Naive thymus-derived CD4-positive, alpha-beta T cell (primary cell): ENCODE measurements at regions of chr1 and their contacts with region 1.

Region 1: DNA sequence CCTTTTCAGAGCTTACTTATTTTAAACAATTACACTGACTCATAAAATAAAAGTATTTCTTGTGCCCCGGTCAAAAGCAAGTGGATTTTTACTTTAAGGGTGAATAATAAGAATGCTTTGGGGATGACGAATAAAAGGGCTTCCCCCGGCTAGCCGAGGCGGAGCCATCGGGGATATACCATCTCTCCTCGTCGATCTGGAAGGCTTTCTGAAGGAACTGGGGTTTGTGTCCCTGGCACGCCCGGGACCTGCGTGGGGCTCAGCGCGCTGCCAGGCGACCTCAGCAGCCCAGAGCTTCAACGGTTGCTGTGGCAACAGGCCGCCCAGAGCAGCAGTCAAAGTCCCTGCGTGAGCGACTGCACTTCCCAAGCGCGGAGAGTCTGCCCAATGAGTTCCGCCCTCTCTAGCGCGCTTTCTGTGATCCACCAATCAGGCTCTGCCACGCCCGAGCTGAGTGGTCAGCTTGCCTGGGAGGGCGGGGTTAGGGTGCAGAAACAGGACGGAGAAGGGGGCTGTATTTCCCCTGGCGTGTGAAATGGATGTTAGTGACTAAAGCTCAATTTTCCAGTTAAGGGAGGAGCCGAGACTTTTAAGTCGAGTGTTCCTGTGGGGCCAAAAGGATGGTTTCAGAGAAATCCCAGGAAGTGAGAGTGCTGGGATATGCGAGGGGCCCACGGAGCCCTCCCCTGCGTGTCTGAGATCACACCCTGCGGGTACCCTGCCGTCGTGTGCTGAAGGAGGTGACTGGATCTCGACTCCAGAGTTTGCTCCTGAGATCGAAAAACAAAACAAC is 33.0 kb upstream of the MGST3 start:
- DNase-seq: peak; percentile 71 to 93 (median 79)
- ATAC-seq: peak; percentile 98
- H3K4me3 ChIP-seq: peak overlapping the region; percentile 70
- H3K4me3 Mint-ChIP-seq: peak overlapping the region; percentile 86 to 95 (median 92)
- H3K27ac ChIP-seq: peak overlapping the region; percentile 31
- H3K27ac Mint-ChIP-seq: peak overlapping the region in 8 of 9 donors; percentile 28 to 94 (median 85)
- H3K4me1 ChIP-seq: peaks cover 11 to 12% of the 10 kb centered on the region in 2 donors
- H3K4me1 Mint-ChIP-seq: peaks cover 21 to 28% (median 26%) of the 10 kb centered on the region in 7 donors
- H3K27me3 ChIP-seq: peaks cover 6 to 16% of the 10 kb centered on the region in 2 donors
- H3K27me3 Mint-ChIP-seq: peaks cover 24 to 55% (median 47%) of the 10 kb centered on the region in 5 donors

Region 2: DNA sequence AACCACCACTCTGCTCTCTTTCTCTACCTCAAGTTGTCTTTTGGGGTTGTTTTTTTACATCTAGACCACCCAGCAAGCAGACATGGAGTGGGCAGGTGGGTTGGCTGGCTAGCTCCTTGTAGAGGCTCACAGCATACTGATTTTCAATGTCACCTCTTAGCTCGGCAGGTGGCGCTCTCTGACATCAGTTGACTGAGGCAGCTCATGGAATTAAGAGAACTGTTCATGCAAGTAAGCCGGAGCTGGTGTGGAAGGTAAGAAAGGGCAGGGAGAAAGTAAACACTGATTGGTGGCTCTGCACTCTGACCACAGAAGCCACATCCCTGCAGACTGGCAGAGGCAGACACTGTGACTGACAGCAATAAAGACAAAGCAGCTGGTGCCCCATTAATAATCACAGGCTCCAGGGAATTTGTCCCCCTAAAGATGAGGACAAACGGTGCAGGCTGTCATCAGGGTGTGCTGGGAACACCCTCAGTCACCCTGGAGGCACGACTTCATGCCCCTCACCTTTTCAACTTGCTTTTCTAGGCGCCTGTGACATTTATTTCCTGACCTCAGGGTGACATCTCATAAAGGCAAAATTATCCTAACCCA is 468.4 kb before region 1 on chr1:
- CTCF ChIA-PET with region 1: no interaction called
- POLR2A ChIA-PET with region 1: no interaction called
- intact Hi-C with region 1: loop called in 1 of 2 experiments (anchors 5 kb)
- DNase-seq: peak in 1 of 9 donors; percentile 24
- ATAC-seq: no peak
- H3K4me3 ChIP-seq: no peak overlapping the region
- H3K4me3 Mint-ChIP-seq: no peak overlapping the region
- H3K27ac ChIP-seq: no peak overlapping the region
- H3K27ac Mint-ChIP-seq: no peak overlapping the region
- H3K4me1 ChIP-seq: no peaks in the 10 kb centered on the region
- H3K4me1 Mint-ChIP-seq: peaks cover 0 to 2% (median 0%) of the 10 kb centered on the region in 7 donors
- H3K27me3 ChIP-seq: no peaks in the 10 kb centered on the region
- H3K27me3 Mint-ChIP-seq: peaks cover 0 to 16% (median 2%) of the 10 kb centered on the region in 5 donors

Region 3: DNA sequence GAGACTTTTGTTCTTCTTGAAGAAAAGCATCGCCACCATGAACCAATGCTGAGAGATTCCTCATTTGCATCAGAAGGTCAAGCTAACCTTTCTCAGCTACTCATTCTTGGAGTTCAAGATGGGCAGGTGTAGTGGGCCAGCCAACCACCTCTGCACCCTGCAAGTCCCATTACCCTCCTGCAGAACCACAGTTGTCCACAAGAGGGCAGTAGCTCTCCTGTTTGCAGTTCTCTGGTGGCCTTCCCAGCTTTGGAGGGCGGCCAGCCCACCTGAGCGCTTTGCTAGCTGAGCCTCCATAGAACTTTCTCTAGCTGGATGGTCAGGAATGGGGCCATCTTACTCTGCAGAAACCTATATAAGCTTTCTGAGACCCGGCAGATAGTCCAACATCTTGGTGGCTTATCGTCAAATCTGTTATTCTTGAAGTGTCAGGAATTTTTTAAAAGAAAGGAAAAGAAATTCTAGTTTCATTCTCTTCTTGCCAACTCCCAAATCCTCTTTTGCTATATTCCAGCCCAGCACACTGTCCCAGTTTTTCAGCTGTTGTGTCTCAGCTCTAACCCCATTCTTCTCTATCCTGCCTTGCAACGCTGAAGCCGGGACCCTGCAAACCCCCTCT is 230.6 kb before region 1 on chr1:
- CTCF ChIA-PET with region 1: interaction called, 11 read pairs
- POLR2A ChIA-PET with region 1: interaction called, 4 read pairs
- intact Hi-C with region 1: loop called (anchors 1 kb)
- DNase-seq: peak; percentile 41 to 80 (median 62)
- ATAC-seq: peak; percentile 81
- H3K4me3 ChIP-seq: no peak overlapping the region
- H3K4me3 Mint-ChIP-seq: no peak overlapping the region
- H3K27ac ChIP-seq: no peak overlapping the region
- H3K27ac Mint-ChIP-seq: no peak overlapping the region
- H3K4me1 ChIP-seq: no peaks in the 10 kb centered on the region
- H3K4me1 Mint-ChIP-seq: peaks cover 0 to 6% (median 0%) of the 10 kb centered on the region in 7 donors
- H3K27me3 ChIP-seq: no peaks in the 10 kb centered on the region
- H3K27me3 Mint-ChIP-seq: peaks cover 67 to 79% (median 72%) of the 10 kb centered on the region in 5 donors

Region 4: GRCh38 chr1:165630629-165631341 is 32.7 kb after region 1 on chr1 and contains the start of gene MGST3:
- CTCF ChIA-PET with region 1: interaction called, 3 read pairs
- POLR2A ChIA-PET with region 1: interaction called, 8 read pairs
- intact Hi-C with region 1: loop called (anchors 1 kb)
- DNase-seq: peak; percentile 91 to 96 (median 93)
- ATAC-seq: peak; percentile 98
- H3K4me3 ChIP-seq: peak within 1 kb of the TSS; percentile 91
- H3K4me3 Mint-ChIP-seq: no peak within 1 kb of the TSS
- H3K27ac ChIP-seq: peak within 1 kb of the TSS; percentile 78
- H3K27ac Mint-ChIP-seq: peak within 1 kb of the TSS in 1 of 9 donors; percentile 89
- H3K4me1 ChIP-seq: peaks cover 16 to 18% of the 10 kb centered on the region in 2 donors
- H3K4me1 Mint-ChIP-seq: peaks cover 5 to 27% (median 20%) of the 10 kb centered on the region in 7 donors
- H3K27me3 ChIP-seq: no peaks in the 10 kb centered on the region
- H3K27me3 Mint-ChIP-seq: peaks cover 0 to 16% (median 0%) of the 10 kb centered on the region in 5 donors
- total RNA-seq, gene MGST3: 21.4 to 59.4 (median 48.3) TPM

Region 5: DNA sequence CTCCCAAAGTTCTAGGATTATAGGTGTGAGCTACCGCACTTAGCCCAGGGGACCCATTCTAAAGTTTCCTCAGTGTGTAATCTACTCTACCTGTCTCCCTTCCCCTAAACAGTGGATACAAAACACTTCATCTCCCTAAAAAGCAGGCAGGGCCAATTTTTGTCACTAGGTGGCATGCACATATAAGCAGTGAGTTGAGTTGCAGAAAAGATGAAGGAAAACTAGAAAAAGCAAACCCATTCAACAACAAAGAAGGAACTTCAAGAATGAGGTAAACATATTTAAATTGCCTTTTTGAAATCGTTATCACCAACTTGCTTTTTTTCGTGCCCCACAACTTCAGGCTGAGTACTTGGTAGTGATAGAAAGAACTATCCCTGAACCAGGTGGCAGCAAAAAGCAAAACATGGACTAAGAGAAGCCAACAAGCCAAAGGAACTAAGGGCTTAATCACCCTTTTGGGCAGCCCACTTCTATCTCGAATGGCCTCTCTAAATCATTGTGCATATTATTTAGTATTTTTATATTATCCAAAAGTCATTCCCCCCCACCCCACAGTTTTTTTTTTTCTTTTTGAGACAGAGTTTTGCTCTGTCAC is 119.9 kb after region 1 on chr1:
- CTCF ChIA-PET with region 1: no interaction called
- POLR2A ChIA-PET with region 1: no interaction called
- intact Hi-C with region 1: loop called in 1 of 2 experiments (anchors 2 kb)
- DNase-seq: peak in 7 of 9 donors; percentile 6 to 41 (median 22)
- ATAC-seq: peak; percentile 45
- H3K4me3 ChIP-seq: no peak overlapping the region
- H3K4me3 Mint-ChIP-seq: no peak overlapping the region
- H3K27ac ChIP-seq: no peak overlapping the region
- H3K27ac Mint-ChIP-seq: no peak overlapping the region
- H3K4me1 ChIP-seq: no peaks in the 10 kb centered on the region
- H3K4me1 Mint-ChIP-seq: peaks cover 0 to 3% (median 0%) of the 10 kb centered on the region in 7 donors
- H3K27me3 ChIP-seq: no peaks in the 10 kb centered on the region
- H3K27me3 Mint-ChIP-seq: peaks cover 0 to 16% (median 0%) of the 10 kb centered on the region in 5 donors

Region 6: DNA sequence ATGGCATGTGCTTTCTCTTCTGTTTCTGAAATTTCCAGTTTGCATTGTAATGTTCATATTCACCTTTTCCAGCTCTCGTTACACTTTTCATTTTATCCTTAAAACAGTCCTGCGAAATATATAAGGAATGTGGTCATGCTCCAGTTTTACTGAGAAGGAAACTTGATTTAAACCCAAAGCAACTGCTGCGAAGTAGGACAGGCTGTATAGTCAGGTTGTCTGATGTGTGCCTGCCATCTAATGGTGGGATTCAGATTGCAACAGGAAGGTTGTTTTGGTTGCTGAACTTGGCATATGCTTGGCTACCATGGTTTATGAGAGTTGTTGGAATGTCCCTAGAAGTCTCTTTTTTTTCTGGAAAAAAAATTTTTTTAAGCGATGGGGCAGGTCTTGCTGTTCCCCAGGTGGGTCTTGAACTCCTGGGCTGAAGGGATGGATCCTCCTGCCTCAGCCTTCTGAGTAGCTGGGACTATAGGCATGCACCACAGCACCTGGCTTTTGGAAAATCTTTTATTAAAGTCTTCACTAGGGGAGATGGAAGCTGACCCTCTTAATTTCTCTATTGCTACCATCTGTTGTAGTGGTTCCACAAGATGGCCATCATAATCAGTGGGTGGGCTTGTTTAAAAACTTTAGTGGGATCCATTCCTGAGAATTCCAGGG is 316.2 kb after region 1 on chr1:
- CTCF ChIA-PET with region 1: interaction called, 66 read pairs
- POLR2A ChIA-PET with region 1: interaction called, 3 read pairs
- intact Hi-C with region 1: loop called (anchors 1 kb)
- DNase-seq: peak; percentile 23 to 76 (median 64)
- ATAC-seq: peak; percentile 89
- H3K4me3 ChIP-seq: no peak overlapping the region
- H3K4me3 Mint-ChIP-seq: no peak overlapping the region
- H3K27ac ChIP-seq: no peak overlapping the region
- H3K27ac Mint-ChIP-seq: no peak overlapping the region
- H3K4me1 ChIP-seq: no peaks in the 10 kb centered on the region
- H3K4me1 Mint-ChIP-seq: peaks cover 0 to 4% (median 2%) of the 10 kb centered on the region in 7 donors
- H3K27me3 ChIP-seq: no peaks in the 10 kb centered on the region
- H3K27me3 Mint-ChIP-seq: peaks cover 0 to 5% (median 0%) of the 10 kb centered on the region in 5 donors

Region 7: DNA sequence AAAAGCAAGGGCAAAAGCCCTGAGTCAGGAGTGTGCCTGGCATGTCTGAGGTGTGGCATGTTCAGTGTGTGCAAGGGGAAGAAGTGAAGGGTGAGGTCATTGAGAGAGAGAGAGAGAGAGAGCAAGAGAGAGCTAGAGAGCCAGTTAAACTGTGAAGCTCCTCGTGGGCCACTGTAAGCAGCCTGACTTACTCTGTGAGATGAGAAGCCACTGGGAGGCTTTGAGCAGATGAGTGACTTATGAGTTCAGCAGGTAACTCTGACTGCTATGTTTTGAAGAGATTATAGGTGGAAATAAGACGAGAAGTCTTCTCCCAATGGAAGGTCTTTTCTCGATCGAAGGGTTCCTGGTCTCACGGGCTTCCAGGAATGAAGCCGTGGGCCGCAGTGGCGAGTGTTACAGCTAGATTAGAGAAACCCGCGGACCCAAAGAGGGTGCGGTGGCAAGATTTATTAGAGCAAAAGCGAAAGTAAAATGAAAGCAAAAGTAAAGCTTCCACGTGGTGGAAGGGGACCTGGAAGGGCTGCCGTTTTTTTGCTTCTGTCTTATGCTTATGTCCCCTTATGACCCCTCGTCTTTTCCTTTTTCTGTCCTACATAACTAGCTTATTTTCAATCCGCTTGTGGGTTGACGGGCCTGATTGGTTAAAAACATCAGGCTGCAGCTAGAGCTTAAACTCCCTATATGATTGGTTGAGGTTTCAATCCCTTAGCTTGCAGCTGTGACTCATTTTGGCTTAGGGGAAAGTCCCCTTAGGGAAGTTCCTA is 891.8 kb after region 1 on chr1:
- CTCF ChIA-PET with region 1: no interaction called
- POLR2A ChIA-PET with region 1: no interaction called
- intact Hi-C with region 1: loop called in 1 of 2 experiments (anchors 10 kb)
- DNase-seq: peak; percentile 29 to 69 (median 61)
- ATAC-seq: peak; percentile 83
- H3K4me3 ChIP-seq: peak overlapping the region; percentile 92
- H3K4me3 Mint-ChIP-seq: no peak overlapping the region
- H3K27ac ChIP-seq: peak overlapping the region; percentile 81
- H3K27ac Mint-ChIP-seq: no peak overlapping the region
- H3K4me1 ChIP-seq: peaks cover 15 to 17% of the 10 kb centered on the region in 2 donors
- H3K4me1 Mint-ChIP-seq: peaks cover 0 to 20% (median 0%) of the 10 kb centered on the region in 7 donors
- H3K27me3 ChIP-seq: no peaks in the 10 kb centered on the region
- H3K27me3 Mint-ChIP-seq: peaks cover 0 to 2% (median 0%) of the 10 kb centered on the region in 5 donors